WTC11 (cell line): ENCODE measurements at regions of chr11 and their contacts with region 1.

Region 1: GRCh38 chr11:10366568-10367370 is 61.9 kb downstream of the ADM start:
- DNase-seq: peak; percentile 90
- ATAC-seq: peak; percentile 99
- H3K4me3 Mint-ChIP-seq: no peak overlapping the region
- H3K27ac Mint-ChIP-seq: peak overlapping the region; percentile 73
- H3K4me1 Mint-ChIP-seq: peaks cover 23% of the 10 kb centered on the region
- H3K27me3 Mint-ChIP-seq: no peaks in the 10 kb centered on the region; the same call in 1 of the 2 replicates
- CTCF ChIP-seq: peak; percentile 87

Region 2: GRCh38 chr11:9757809-9758636 is 608.7 kb before region 1 on chr11:
- CTCF ChIA-PET with region 1: interaction called, 17 read pairs
- POLR2A ChIA-PET with region 1: interaction called, 4 read pairs
- DNase-seq: peak; percentile 79
- ATAC-seq: peak; percentile 75
- H3K4me3 Mint-ChIP-seq: peak overlapping the region; percentile 66
- H3K27ac Mint-ChIP-seq: peak overlapping the region; percentile 41; the same call in 1 of the 2 replicates
- H3K4me1 Mint-ChIP-seq: peaks cover 43% of the 10 kb centered on the region
- H3K27me3 Mint-ChIP-seq: 0 out of 2 replicates have a peak, but pooled peaks cover 3% of the 10 kb centered on the region
- CTCF ChIP-seq: peak; percentile 84

Region 3: GRCh38 chr11:9982800-9983579 is 383.8 kb before region 1 on chr11:
- CTCF ChIA-PET with region 1: interaction called, 10 read pairs
- POLR2A ChIA-PET with region 1: no interaction called
- DNase-seq: peak; percentile 48
- ATAC-seq: peak; percentile 94
- H3K4me3 Mint-ChIP-seq: no peak overlapping the region
- H3K27ac Mint-ChIP-seq: peak overlapping the region; percentile 89
- H3K4me1 Mint-ChIP-seq: peaks cover 34% of the 10 kb centered on the region
- H3K27me3 Mint-ChIP-seq: no peaks in the 10 kb centered on the region; the same call in 1 of the 2 replicates
- CTCF ChIP-seq: no peak

Region 4: GRCh38 chr11:10158461-10158860 is 208.3 kb before region 1 on chr11:
- CTCF ChIA-PET with region 1: no interaction called
- POLR2A ChIA-PET with region 1: no interaction called
- DNase-seq: no peak
- ATAC-seq: no peak
- H3K4me3 Mint-ChIP-seq: no peak overlapping the region
- H3K27ac Mint-ChIP-seq: no peak overlapping the region
- H3K4me1 Mint-ChIP-seq: peaks cover 15% of the 10 kb centered on the region
- H3K27me3 Mint-ChIP-seq: no peaks in the 10 kb centered on the region
- CTCF ChIP-seq: no peak

Region 5: GRCh38 chr11:10208131-10208575 is 158.6 kb before region 1 on chr11:
- CTCF ChIA-PET with region 1: interaction called, 12 read pairs
- POLR2A ChIA-PET with region 1: no interaction called
- DNase-seq: no peak
- ATAC-seq: peak; percentile 76
- H3K4me3 Mint-ChIP-seq: no peak overlapping the region
- H3K27ac Mint-ChIP-seq: no peak overlapping the region
- H3K4me1 Mint-ChIP-seq: peaks cover 6% of the 10 kb centered on the region
- H3K27me3 Mint-ChIP-seq: no peaks in the 10 kb centered on the region
- CTCF ChIP-seq: peak; percentile 70

Region 6: GRCh38 chr11:10317776-10318526 is 48.8 kb before region 1 on chr11:
- CTCF ChIA-PET with region 1: interaction called, 15 read pairs
- POLR2A ChIA-PET with region 1: no interaction called
- DNase-seq: no peak
- ATAC-seq: no peak
- H3K4me3 Mint-ChIP-seq: no peak overlapping the region
- H3K27ac Mint-ChIP-seq: 0 out of 2 replicates have a peak overlapping the region, but pooled peaks have one; percentile 66
- H3K4me1 Mint-ChIP-seq: peaks cover 49% of the 10 kb centered on the region
- H3K27me3 Mint-ChIP-seq: no peaks in the 10 kb centered on the region; the same call in 1 of the 2 replicates
- CTCF ChIP-seq: no peak

Region 7: DNA sequence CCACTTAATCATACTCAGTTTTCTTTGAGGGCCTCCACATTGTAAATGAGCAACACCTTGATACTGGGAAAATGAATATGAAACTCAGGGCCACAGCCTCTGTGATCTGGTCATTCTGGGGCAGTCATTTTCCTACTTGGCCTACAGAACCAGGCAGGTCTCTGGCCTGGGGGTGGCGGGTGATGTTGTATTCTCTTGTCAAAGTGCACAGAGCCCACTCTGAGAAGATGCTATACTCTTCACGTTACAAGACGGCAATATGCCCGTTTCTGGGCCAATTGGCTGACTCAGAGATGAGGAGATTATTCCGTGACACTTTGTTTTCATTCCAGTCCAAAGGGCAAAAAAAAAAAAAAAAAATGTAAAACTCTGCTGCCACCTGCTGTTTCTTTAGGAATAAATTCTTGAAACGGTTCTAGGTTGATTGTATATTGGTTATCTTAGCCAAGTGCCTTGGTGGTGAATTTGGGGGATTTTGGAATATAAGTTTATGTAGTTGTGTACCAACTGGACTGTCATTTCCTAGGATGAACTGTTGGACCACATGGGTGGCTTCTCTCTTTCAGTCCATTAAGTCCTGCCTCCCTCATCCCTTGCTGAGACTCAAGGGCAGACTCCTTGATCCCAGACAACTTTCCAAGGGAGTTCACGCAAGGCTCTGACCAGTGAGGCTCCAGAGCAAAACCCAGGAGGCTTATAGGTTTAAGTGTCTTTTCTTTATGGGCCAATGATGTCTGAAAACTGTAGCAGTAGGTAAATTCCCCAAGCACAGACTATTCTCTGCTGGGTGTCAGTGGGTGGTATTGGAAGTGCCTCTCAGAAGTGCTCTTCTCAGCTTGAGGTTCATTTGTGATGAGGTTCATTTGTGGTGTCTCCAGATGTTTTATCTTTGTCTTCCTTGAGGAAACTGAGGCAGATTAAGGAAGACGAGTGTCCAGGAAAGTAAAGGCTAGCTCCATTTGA is 43.7 kb before region 1 on chr11:
- CTCF ChIA-PET with region 1: interaction called, 34 read pairs
- POLR2A ChIA-PET with region 1: no interaction called
- DNase-seq: no peak
- ATAC-seq: peak; percentile 50; the same call in 1 of the 2 replicates
- H3K4me3 Mint-ChIP-seq: no peak overlapping the region
- H3K27ac Mint-ChIP-seq: peak overlapping the region; percentile 47; the same call in 1 of the 2 replicates
- H3K4me1 Mint-ChIP-seq: peaks cover 61% of the 10 kb centered on the region
- H3K27me3 Mint-ChIP-seq: no peaks in the 10 kb centered on the region
- CTCF ChIP-seq: no peak

Region 8: GRCh38 chr11:10351768-10352641 is 14.8 kb before region 1 on chr11:
- CTCF ChIA-PET with region 1: interaction called, 28 read pairs
- POLR2A ChIA-PET with region 1: interaction called, 15 read pairs
- DNase-seq: peak; percentile 84
- ATAC-seq: peak; percentile 89
- H3K4me3 Mint-ChIP-seq: peak overlapping the region; percentile 55
- H3K27ac Mint-ChIP-seq: peak overlapping the region; percentile 100
- H3K4me1 Mint-ChIP-seq: peaks cover 68% of the 10 kb centered on the region
- H3K27me3 Mint-ChIP-seq: no peaks in the 10 kb centered on the region; the same call in 1 of the 2 replicates
- CTCF ChIP-seq: no peak